K562 (cell line): ENCODE measurements at regions of chr1 and their contacts with region 1.

Region 1: GRCh38 chr1:204640578-204640977 is 45.0 kb downstream of the LRRN2 start:
- DNase-seq: peak in 3 of 4 experiments; percentile 23 to 36 (median 29)
- ATAC-seq: peak; percentile 68
- H3K4me3 ChIP-seq: no peak overlapping the region
- H3K27ac ChIP-seq: no peak overlapping the region
- H3K4me1 ChIP-seq: peaks cover 0 to 3% of the 10 kb centered on the region in 2 experiments; a peak in 1 of 5 replicates
- H3K27me3 ChIP-seq: peaks cover 31 to 56% of the 10 kb centered on the region in 2 experiments
- CTCF ChIP-seq: 0 out of 6 replicates have a peak, but pooled peaks of 1 of the 3 experiments have one; percentile 22
- EP300 ChIP-seq: no peak
- POLR2A ChIP-seq: no peak
- RAD21 ChIP-seq: no peak

Region 2: GRCh38 chr1:204574865-204575163 is 65.8 kb before region 1 on chr1:
- CTCF ChIA-PET with region 1: no interaction called
- POLR2A ChIA-PET with region 1: interaction called, 3 read pairs
- in situ Hi-C with region 1: no loop called
- intact Hi-C with region 1: loop called (anchors 1 kb)
- DNase-seq: no peak
- ATAC-seq: peak; percentile 41
- H3K4me3 ChIP-seq: no peak overlapping the region
- H3K27ac ChIP-seq: no peak overlapping the region
- H3K4me1 ChIP-seq: 0 out of 5 replicates have a peak, but pooled peaks cover 0 to 3% of the 10 kb centered on the region in 2 experiments
- H3K27me3 ChIP-seq: peaks cover 0 to 8% of the 10 kb centered on the region in 2 experiments; a peak in 1 of 5 replicates
- CTCF ChIP-seq: no peak
- EP300 ChIP-seq: no peak
- POLR2A ChIP-seq: no peak
- RAD21 ChIP-seq: no peak

Region 3: GRCh38 chr1:204651843-204652421 is 11.4 kb after region 1 on chr1:
- CTCF ChIA-PET with region 1: no interaction called
- POLR2A ChIA-PET with region 1: interaction called, 10 read pairs
- in situ Hi-C with region 1: no loop called
- intact Hi-C with region 1: no loop called
- DNase-seq: no peak
- ATAC-seq: no peak
- H3K4me3 ChIP-seq: no peak overlapping the region
- H3K27ac ChIP-seq: no peak overlapping the region
- H3K4me1 ChIP-seq: peaks cover 3 to 5% of the 10 kb centered on the region in 2 experiments; a peak in 3 of 5 replicates
- H3K27me3 ChIP-seq: peaks cover 13 to 46% of the 10 kb centered on the region in 2 experiments; a peak in 4 of 5 replicates
- CTCF ChIP-seq: no peak
- EP300 ChIP-seq: no peak
- POLR2A ChIP-seq: no peak
- RAD21 ChIP-seq: no peak

Region 4: GRCh38 chr1:204751894-204752687 is 111.5 kb after region 1 on chr1:
- CTCF ChIA-PET with region 1: no interaction called
- POLR2A ChIA-PET with region 1: no interaction called
- in situ Hi-C with region 1: no loop called
- intact Hi-C with region 1: no loop called
- DNase-seq: peak; percentile 52 to 76 (median 70)
- ATAC-seq: peak; percentile 99
- H3K4me3 ChIP-seq: no peak overlapping the region
- H3K27ac ChIP-seq: no peak overlapping the region
- H3K4me1 ChIP-seq: peaks cover 6 to 9% of the 10 kb centered on the region in 2 experiments; a peak in 4 of 5 replicates
- H3K27me3 ChIP-seq: peaks cover 0 to 6% of the 10 kb centered on the region in 2 experiments; a peak in 1 of 5 replicates
- CTCF ChIP-seq: peak; percentile 62 to 71 (median 66)
- EP300 ChIP-seq: no peak
- POLR2A ChIP-seq: no peak
- RAD21 ChIP-seq: peak; percentile 29 to 37

Region 5: DNA sequence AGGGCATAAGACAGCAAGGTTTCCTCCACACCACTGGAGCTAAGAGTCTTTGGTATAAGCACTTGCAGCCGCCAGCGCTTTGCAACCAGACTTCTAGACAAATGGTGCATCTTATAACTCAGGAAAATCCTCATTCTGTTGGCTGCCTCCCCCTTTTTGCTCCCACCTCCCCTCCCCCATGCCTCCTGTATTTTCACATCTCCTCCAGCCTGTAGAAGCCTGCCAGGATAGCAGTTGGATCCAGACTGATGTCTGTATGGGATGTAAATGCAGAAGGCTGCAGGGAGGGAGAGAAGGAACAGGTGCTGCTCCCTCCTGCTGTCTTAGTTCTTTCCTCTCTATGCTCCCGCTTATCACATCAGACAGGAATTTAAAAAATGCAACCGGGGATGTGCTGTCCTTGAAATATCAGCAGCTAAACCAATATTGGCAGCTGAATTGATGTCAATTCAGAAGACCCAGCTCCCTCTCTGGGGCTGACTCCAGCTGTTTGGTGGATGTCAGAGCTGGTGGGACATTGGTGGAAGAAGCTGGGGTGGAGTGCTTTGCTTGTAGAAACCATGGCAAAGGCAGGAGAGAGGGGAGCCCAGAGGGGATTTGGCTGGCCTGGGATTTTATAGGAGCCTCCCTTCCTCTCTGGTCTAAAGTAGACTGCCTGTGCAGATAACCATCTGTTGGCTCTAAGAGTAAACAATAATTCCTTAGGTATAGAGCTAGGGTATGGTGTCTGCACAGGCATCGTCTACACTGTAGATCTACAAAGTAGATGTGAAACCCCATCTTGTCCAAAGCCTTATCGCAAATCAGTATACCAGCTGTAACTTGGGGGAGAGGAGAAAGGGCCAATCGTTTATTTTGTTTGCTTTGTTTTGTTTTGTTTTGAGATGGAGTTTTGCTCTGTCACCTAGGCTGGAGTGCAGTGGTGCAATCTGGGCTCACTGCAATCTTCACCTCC is 283.7 kb after region 1 on chr1:
- CTCF ChIA-PET with region 1: no interaction called
- POLR2A ChIA-PET with region 1: no interaction called
- in situ Hi-C with region 1: no loop called
- intact Hi-C with region 1: no loop called
- DNase-seq: no peak
- ATAC-seq: no peak
- H3K4me3 ChIP-seq: no peak overlapping the region
- H3K27ac ChIP-seq: no peak overlapping the region
- H3K4me1 ChIP-seq: peaks cover 0 to 7% of the 10 kb centered on the region in 2 experiments; a peak in 1 of 5 replicates
- H3K27me3 ChIP-seq: peaks cover 21 to 54% of the 10 kb centered on the region in 2 experiments; a peak in 4 of 5 replicates
- CTCF ChIP-seq: no peak
- EP300 ChIP-seq: no peak
- POLR2A ChIP-seq: no peak
- RAD21 ChIP-seq: no peak